A549 (cell line): ENCODE measurements at regions of chr1 and their contacts with region 1.

Region 1: DNA sequence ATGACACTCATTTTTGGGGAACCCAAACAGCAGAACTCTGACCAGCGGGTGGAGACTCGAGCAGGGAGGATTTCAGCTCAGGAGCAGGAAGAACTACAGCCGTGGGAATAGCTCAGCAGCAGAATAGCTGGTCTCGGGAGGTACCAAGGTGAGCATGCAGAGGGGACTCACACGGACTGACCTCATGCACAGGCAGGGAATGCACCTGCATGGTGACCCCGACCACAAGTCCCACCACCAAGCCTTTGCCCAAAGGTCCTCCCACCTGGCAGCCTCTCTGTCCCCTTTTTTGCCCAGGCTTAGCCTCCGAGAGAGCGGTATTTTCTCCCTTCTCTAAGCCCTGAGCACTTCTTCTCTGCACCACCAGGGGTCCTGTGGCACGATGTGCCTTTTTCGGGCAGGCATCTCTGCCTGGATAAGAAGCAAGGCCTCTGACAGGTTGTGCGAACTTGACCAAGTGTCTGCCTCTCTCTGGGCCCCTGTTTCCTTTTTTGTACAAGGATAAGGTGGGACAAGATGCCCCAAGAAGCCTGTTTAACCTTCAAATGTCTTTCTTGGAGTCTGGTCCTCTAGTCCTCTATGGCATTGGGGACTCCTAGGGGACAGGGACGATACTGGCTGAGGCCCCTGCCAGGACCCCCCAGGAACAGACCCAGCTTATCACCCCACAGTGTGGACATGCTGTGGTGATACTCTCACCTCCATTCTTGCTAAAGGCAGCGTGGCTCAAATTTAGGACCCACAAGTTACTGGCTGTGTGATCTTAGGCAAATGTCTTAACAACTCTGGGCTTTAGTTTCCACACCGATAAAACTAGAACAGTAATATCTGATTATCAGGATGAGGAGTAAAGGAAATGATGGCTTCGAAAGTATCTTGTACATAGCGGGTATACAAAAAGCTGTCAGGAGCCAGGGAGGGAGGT is 9.0 kb upstream of the FGR start:
- DNase-seq: peak; percentile 54 to 62
- ATAC-seq: peak; percentile 86 to 95
- H3K4me3 ChIP-seq: no peak overlapping the region
- H3K27ac ChIP-seq: no peak overlapping the region
- H3K4me1 ChIP-seq: no peaks in the 10 kb centered on the region
- CTCF ChIP-seq: peak; percentile 37
- EP300 ChIP-seq: no peak
- POLR2A ChIP-seq: no peak
- RAD21 ChIP-seq: peak in 1 of 2 experiments; percentile 33; a peak in 1 of 5 replicates

Region 2: GRCh38 chr1:27436204-27437159 is 207.5 kb before region 1 on chr1:
- CTCF ChIA-PET with region 1: no interaction called
- POLR2A ChIA-PET with region 1: no interaction called
- DNase-seq: peak; percentile 34 to 67
- ATAC-seq: peak; percentile 47 to 84; a peak in 4 of 6 replicates
- H3K4me3 ChIP-seq: no peak overlapping the region
- H3K27ac ChIP-seq: peak overlapping the region; percentile 48 to 63; a peak in 5 of 6 replicates
- H3K4me1 ChIP-seq: peaks cover 33% of the 10 kb centered on the region
- CTCF ChIP-seq: no peak
- EP300 ChIP-seq: no peak
- POLR2A ChIP-seq: no peak
- RAD21 ChIP-seq: no peak

Region 3: GRCh38 chr1:27630859-27631491 is 13.0 kb before region 1 on chr1:
- CTCF ChIA-PET with region 1: interaction called, 11 read pairs
- POLR2A ChIA-PET with region 1: no interaction called
- DNase-seq: no peak
- ATAC-seq: no peak
- H3K4me3 ChIP-seq: no peak overlapping the region
- H3K27ac ChIP-seq: no peak overlapping the region
- H3K4me1 ChIP-seq: no peaks in the 10 kb centered on the region
- CTCF ChIP-seq: no peak
- EP300 ChIP-seq: no peak
- POLR2A ChIP-seq: no peak
- RAD21 ChIP-seq: no peak

Region 4: GRCh38 chr1:27656157-27656893 is 12.4 kb after region 1 on chr1:
- CTCF ChIA-PET with region 1: interaction called, 20 read pairs
- POLR2A ChIA-PET with region 1: no interaction called
- DNase-seq: no peak
- ATAC-seq: no peak
- H3K4me3 ChIP-seq: no peak overlapping the region
- H3K27ac ChIP-seq: no peak overlapping the region
- H3K4me1 ChIP-seq: peaks cover 9% of the 10 kb centered on the region; the same call in 1 of the 3 replicates
- CTCF ChIP-seq: no peak
- EP300 ChIP-seq: no peak
- POLR2A ChIP-seq: no peak
- RAD21 ChIP-seq: no peak

Region 5: GRCh38 chr1:27662707-27663393 is 18.9 kb after region 1 on chr1:
- CTCF ChIA-PET with region 1: interaction called, 20 read pairs
- POLR2A ChIA-PET with region 1: no interaction called
- DNase-seq: peak; percentile 68 to 71
- ATAC-seq: peak; percentile 62 to 80
- H3K4me3 ChIP-seq: no peak overlapping the region
- H3K27ac ChIP-seq: peak overlapping the region; percentile 38 to 72; a peak in 4 of 6 replicates
- H3K4me1 ChIP-seq: peaks cover 9% of the 10 kb centered on the region; the same call in 1 of the 3 replicates
- CTCF ChIP-seq: peak; percentile 80
- EP300 ChIP-seq: no peak
- POLR2A ChIP-seq: no peak
- RAD21 ChIP-seq: peak; percentile 81 to 83